ENCODE measurements at regions of chr2 and their contacts with region 1.

Region 1: GRCh38 chr2:172442072-172442895 is 14.9 kb downstream of the ITGA6 start:
- DNase-seq: peak; percentile 94
- ATAC-seq: peak; percentile 95
- H3K4me3 ChIP-seq: peak overlapping the region in 1 of 2 experiments; percentile 43; a peak in 2 of 4 replicates
- H3K27ac ChIP-seq: peak overlapping the region; percentile 51
- H3K4me1 ChIP-seq: peaks cover 60% of the 10 kb centered on the region
- H3K27me3 ChIP-seq: no peaks in the 10 kb centered on the region
- CTCF ChIP-seq: no peak

Region 2: DNA sequence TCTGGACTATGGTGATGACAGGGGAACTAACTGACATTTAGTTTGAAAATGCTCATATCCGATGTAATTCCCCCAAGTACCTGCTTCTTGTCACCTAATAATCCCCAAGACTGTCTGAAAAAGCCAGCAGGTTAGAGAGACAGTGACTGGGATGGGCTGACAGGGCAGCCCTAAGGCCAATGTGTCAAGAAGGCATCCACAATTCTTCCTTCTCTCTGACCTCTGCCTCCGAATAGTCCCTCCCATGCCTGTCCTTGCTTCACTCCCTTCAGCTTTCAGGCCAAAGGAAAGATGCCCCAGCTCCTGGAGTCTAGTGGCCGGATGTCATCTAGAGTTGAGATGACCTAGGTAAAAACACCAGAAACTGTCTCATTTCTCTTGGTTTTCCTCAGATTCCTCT is 262.0 kb before region 1 on chr2:
- CTCF ChIA-PET with region 1: interaction called, 10 read pairs
- POLR2A ChIA-PET with region 1: interaction called, 3 read pairs
- in situ Hi-C with region 1: no loop called
- intact Hi-C with region 1: no loop called
- DNase-seq: no peak
- ATAC-seq: no peak
- H3K4me3 ChIP-seq: no peak overlapping the region
- H3K27ac ChIP-seq: no peak overlapping the region
- H3K4me1 ChIP-seq: no peaks in the 10 kb centered on the region; the same call in 1 of the 2 replicates
- H3K27me3 ChIP-seq: no peaks in the 10 kb centered on the region
- CTCF ChIP-seq: no peak